CD14-positive monocyte (primary cell): ENCODE measurements at regions of chr9 and their contacts with region 1.

Region 1: DNA sequence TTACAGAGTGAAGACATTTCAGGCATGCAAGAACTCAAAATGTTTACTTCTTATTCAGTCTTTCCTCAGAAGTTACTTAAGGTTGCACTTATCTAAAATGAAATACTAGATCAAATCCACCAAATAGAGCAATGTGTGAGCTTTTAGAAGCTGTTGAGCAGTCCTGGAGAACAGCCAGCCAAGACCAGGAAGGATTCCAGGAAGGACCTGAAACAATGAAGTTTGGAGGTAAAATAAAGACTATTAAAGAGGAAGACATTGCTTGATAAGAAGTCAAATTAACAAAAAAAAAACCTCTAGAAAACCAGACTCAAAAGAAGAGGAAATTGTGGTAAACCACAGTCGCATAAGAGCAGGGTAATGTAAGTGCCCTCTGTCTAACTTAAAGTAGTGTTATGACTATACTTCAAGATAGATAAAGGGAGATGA is 156.2 kb upstream of the S1PR3 start:
- DNase-seq: peak; percentile 53 to 64 (median 60)
- H3K4me3 ChIP-seq: no peak overlapping the region
- H3K4me3 Mint-ChIP-seq: peak overlapping the region in 1 of 2 donors; percentile 66
- H3K27ac ChIP-seq: no peak overlapping the region
- H3K27ac Mint-ChIP-seq: peak overlapping the region in 1 of 7 donors; percentile 66
- H3K4me1 ChIP-seq: peaks cover 12 to 13% of the 10 kb centered on the region in 2 donors
- H3K4me1 Mint-ChIP-seq: peaks cover 17% of the 10 kb centered on the region
- H3K27me3 ChIP-seq: peaks cover 79 to 92% of the 10 kb centered on the region in 2 donors
- H3K27me3 Mint-ChIP-seq: peaks cover 85 to 92% (median 90%) of the 10 kb centered on the region in 3 donors
- CTCF ChIP-seq: no peak

Region 2: GRCh38 chr9:88852794-88853193 is 17.7 kb after region 1 on chr9:
- intact Hi-C with region 1: no loop called
- DNase-seq: peak in 1 of 3 donors; percentile 38
- H3K4me3 ChIP-seq: no peak overlapping the region
- H3K4me3 Mint-ChIP-seq: no peak overlapping the region
- H3K27ac ChIP-seq: no peak overlapping the region
- H3K27ac Mint-ChIP-seq: no peak overlapping the region
- H3K4me1 ChIP-seq: no peaks in the 10 kb centered on the region
- H3K4me1 Mint-ChIP-seq: no peaks in the 10 kb centered on the region
- H3K27me3 ChIP-seq: peaks cover 17 to 69% of the 10 kb centered on the region in 2 donors
- H3K27me3 Mint-ChIP-seq: peaks cover 24 to 59% (median 34%) of the 10 kb centered on the region in 3 donors
- CTCF ChIP-seq: no peak

Region 3: DNA sequence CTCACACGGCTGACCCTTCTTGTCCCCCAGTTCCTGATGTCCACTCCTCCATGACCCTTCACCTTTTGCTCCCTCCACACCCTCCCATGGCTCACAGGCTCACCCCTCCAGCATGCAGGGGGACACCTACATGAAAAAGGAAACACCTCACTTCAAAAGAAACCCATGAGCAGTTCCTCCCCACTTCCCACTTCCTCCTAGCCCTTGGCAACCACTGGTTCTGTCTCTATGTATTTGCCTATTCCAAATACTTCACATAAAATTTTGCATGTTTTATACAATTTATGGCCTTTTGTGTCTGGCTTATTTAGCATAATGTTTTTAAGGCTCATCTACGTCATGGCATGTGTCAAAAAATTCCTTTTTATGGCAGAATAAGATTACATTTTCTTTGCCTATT is 56.0 kb after region 1 on chr9:
- intact Hi-C with region 1: loop called in 1 of 2 experiments (anchors 10 kb)
- DNase-seq: peak; percentile 20 to 44 (median 32)
- H3K4me3 ChIP-seq: no peak overlapping the region
- H3K4me3 Mint-ChIP-seq: no peak overlapping the region
- H3K27ac ChIP-seq: no peak overlapping the region
- H3K27ac Mint-ChIP-seq: no peak overlapping the region
- H3K4me1 ChIP-seq: peaks cover 5 to 7% of the 10 kb centered on the region in 2 donors
- H3K4me1 Mint-ChIP-seq: peaks cover 16% of the 10 kb centered on the region
- H3K27me3 ChIP-seq: peaks cover 14 to 33% of the 10 kb centered on the region in 2 donors
- H3K27me3 Mint-ChIP-seq: peaks cover 31 to 43% (median 35%) of the 10 kb centered on the region in 3 donors
- CTCF ChIP-seq: no peak